ENCODE measurements at regions of chr7 and their contacts with region 1.

Region 1: GRCh38 chr7:139118234-139118804 is 8.8 kb upstream of the ZC3HAV1 start:
- DNase-seq: peak; percentile 32
- ATAC-seq: peak; percentile 92
- H3K4me3 ChIP-seq: peak overlapping the region in 1 of 2 experiments; percentile 45; a peak in 2 of 4 replicates
- H3K27ac ChIP-seq: no peak overlapping the region
- H3K4me1 ChIP-seq: peaks cover 2 to 22% of the 10 kb centered on the region in 2 experiments; a peak in 3 of 4 replicates
- H3K27me3 ChIP-seq: no peaks in the 10 kb centered on the region
- CTCF ChIP-seq: peak in 2 of 3 experiments; percentile 18 to 46; a peak in 3 of 6 replicates
- POLR2A ChIP-seq: no peak
- RAD21 ChIP-seq: no peak

Region 2: DNA sequence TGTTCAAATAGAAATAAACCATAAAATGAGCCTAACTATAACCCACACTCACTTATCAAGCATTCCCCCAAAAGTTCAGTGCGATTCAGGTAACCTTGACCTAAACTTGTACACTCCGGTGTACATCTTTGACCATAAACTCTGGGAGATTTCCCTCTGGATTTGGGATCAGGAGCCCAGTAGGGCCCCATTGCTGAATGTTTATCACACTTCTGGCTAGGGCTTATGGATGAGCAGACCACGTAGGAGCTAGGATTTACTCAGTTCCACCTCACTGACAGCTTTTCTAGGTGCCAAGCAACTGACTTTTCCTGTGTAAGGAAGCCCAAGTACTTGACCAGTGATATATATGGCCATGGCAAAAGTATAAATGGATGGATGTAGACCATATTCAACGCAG is 530.8 kb before region 1 on chr7:
- CTCF ChIA-PET with region 1: no interaction called
- POLR2A ChIA-PET with region 1: no interaction called
- RAD21 ChIA-PET with region 1: no interaction called
- intact Hi-C with region 1: no loop called
- DNase-seq: no peak
- ATAC-seq: no peak
- H3K4me3 ChIP-seq: no peak overlapping the region
- H3K27ac ChIP-seq: no peak overlapping the region
- H3K4me1 ChIP-seq: no peaks in the 10 kb centered on the region
- H3K27me3 ChIP-seq: no peaks in the 10 kb centered on the region
- CTCF ChIP-seq: no peak
- POLR2A ChIP-seq: no peak
- RAD21 ChIP-seq: no peak

Region 3: GRCh38 chr7:139133335-139134139 is 15.2 kb after region 1 on chr7:
- CTCF ChIA-PET with region 1: no interaction called
- POLR2A ChIA-PET with region 1: interaction called, 3 read pairs
- RAD21 ChIA-PET with region 1: no interaction called
- intact Hi-C with region 1: loop called (anchors 2 kb)
- DNase-seq: peak; percentile 82
- ATAC-seq: peak; percentile 99
- H3K4me3 ChIP-seq: peak overlapping the region; percentile 67 to 85
- H3K27ac ChIP-seq: no peak overlapping the region
- H3K4me1 ChIP-seq: peaks cover 4 to 18% of the 10 kb centered on the region in 2 experiments
- H3K27me3 ChIP-seq: no peaks in the 10 kb centered on the region
- CTCF ChIP-seq: no peak
- POLR2A ChIP-seq: peak; percentile 59
- RAD21 ChIP-seq: peak; percentile 10; the same call in 1 of the 2 replicates